ENCODE measurements at regions of chr2 and their contacts with region 1.

Region 1: DNA sequence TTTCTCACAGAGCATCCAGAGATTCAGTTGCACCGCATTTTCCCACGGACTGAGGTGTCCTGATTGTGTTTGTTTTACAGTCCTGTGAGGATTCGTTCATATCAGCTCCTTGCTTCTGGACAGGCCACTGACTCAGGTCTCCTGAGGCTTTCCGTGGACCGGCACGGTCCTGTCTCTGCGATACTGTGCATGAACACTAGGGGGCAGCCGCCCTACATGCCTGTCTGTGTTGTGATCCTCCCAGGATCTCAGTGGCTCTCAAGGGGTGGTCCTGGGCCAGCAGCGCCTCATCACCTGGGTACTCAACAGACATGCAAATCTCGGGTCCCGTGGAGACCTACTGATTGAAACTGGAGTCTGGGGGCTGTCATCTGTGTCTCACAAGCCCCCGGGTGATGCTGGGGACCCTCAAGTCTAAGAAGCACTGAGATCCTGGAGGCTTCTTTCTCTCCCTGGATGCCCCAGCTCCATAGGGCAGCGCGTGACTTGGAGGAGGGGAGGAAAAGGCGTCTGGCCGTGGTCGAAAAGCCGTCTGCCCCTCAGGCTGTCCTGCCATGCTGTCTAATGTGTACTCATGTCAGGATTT is 28.9 kb downstream of the IL1R2 start:
- DNase-seq: peak; percentile 89
- H3K4me3 ChIP-seq: no peak overlapping the region
- H3K27ac ChIP-seq: peak overlapping the region in 3 of 4 donors; percentile 12 to 58 (median 44)
- H3K4me1 ChIP-seq: peaks cover 0 to 10% (median 0%) of the 10 kb centered on the region in 4 donors
- H3K27me3 ChIP-seq: no peaks in the 10 kb centered on the region
- CTCF ChIP-seq: peak; percentile 98 to 99 (median 98)
- EP300 ChIP-seq: no peak
- POLR2A ChIP-seq: no peak

Region 2: DNA sequence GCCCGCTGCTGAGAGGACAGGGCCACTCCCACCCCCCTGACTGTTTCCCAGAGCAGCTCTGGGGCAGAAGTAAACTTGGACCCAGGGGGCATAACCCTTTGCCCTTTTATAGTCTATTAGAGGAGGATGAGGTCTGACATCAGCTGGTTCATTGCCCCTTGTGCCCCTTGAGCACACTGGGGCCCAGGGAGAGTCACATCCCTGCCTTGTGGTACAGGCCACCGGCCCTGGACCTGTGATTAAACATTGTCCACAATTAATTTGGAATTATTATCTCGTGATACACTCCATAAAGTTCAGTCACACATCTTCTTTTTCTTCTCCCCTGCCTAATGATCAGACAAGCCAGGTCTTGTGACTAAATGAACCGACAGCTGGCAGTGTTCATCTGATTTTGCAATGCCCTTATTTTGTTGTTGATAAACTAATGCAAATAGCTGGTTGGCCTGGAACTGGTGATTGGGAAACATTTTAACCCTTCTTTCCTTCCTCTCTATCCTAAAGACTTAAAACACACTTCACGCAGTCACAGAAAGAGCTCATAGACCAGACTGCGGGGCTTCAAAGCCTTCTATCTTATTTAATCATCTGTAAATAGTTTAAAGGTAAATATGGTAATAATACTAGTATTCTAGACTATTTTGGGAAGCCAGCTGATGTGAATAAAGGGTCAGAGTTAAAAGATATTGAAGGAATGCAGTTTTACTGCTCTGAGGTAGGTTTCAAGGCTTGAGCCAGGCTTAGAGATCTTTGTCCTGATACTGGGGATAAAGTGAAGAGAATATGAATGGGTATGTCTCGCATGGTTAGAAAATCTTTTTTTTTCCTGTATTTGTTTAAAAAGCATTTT is 135.2 kb after region 1 on chr2:
- in situ Hi-C with region 1: loop called in 3 of 4 experiments (anchors 10 to 25 kb)
- intact Hi-C with region 1: loop called (anchors 5 kb)
- DNase-seq: peak; percentile 26
- H3K4me3 ChIP-seq: no peak overlapping the region
- H3K27ac ChIP-seq: peak overlapping the region; percentile 55 to 71 (median 64)
- H3K4me1 ChIP-seq: no peaks in the 10 kb centered on the region
- H3K27me3 ChIP-seq: no peaks in the 10 kb centered on the region
- CTCF ChIP-seq: no peak
- EP300 ChIP-seq: no peak
- POLR2A ChIP-seq: no peak

Region 3: DNA sequence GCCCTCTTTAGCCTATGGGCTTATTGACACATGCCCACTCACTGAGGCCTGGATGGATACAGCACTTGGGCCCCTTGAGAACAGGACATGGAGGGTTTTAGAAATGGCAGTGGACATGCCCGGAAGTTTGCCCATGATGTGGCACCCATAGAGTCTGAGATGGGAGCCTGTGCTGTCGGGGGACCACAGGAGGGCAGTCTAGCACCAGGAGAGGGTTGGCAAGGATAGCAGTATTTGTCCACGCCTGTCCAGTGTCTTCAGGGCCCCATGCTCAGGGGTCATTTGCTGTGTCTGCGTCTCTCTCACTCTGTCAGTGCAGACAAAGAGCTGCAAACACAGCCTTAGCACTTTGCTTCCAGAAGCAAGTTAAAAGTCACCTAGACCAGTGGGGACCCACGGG is 214.8 kb after region 1 on chr2:
- in situ Hi-C with region 1: loop called (anchors 5 to 10 kb)
- intact Hi-C with region 1: loop called (anchors 2 kb)
- DNase-seq: no peak
- H3K4me3 ChIP-seq: no peak overlapping the region
- H3K27ac ChIP-seq: no peak overlapping the region
- H3K4me1 ChIP-seq: peaks cover 0 to 2% (median 2%) of the 10 kb centered on the region in 4 donors
- H3K27me3 ChIP-seq: no peaks in the 10 kb centered on the region
- CTCF ChIP-seq: peak in 1 of 5 experiments; percentile 4
- EP300 ChIP-seq: no peak
- POLR2A ChIP-seq: no peak

Region 4: DNA sequence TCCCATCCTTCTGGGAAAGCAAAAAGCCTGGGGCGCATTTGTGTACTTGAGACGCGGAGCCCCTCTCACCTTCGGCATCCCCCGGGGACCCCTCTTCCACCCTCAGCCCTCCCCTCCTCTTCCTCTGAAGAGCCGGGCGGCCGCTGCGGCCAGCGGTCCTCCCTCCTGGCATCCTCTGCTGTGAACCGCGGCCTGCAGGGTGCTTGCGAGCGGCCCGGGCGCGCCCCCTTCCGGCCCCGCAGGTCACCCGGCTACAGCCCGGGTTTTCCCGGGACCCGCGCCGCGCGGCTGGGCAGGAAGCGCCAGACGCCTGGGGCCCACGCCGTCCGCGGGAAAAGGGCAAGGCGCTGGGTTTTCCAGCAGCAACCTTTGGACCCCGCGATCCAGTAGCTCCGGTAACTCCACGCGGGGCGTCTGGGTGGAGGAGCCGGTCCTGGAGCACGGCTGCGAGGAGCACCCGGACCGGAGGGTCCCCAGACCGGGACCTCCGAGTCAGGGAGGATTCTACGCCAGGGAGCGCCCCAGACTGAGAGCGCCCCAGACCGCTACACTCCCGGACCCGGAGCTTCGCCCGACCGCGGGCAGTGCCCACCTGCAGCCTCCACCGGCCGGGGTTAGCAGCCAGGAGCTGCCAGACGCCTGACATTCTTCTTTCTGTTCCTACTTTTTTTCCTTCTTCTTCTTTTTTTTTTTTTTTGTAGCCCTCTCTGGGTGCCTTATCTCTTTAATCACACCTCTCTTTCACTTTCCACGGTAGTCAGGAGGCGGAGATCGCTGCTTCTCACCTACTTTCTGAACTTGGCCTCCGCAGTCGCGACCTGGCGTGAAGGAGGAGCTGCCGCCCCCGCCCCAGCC is 335.1 kb after region 1 on chr2 and contains the start of gene IL18R1:
- in situ Hi-C with region 1: loop called in 2 of 4 experiments (anchors 10 to 25 kb)
- intact Hi-C with region 1: loop called (anchors 10 kb)
- DNase-seq: peak; percentile 84
- H3K4me3 ChIP-seq: peak within 1 kb of the TSS; percentile 40 to 89 (median 72)
- H3K27ac ChIP-seq: peak within 1 kb of the TSS; percentile 64 to 82 (median 74)
- H3K4me1 ChIP-seq: peaks cover 0 to 14% (median 2%) of the 10 kb centered on the region in 4 donors
- H3K27me3 ChIP-seq: no peaks in the 10 kb centered on the region
- CTCF ChIP-seq: peak; percentile 62 to 90 (median 81)
- EP300 ChIP-seq: no peak
- POLR2A ChIP-seq: peak; percentile 28
- total RNA-seq, gene IL18R1: 0.75 to 6.0 (median 2.8) TPM

Measured in transverse colon (tissue), 4 donors.